ENCODE measurements at regions of chr13 and their contacts with region 1.

Region 1: GRCh38 chr13:95834134-95834765 is 157.3 kb downstream of the DNAJC3 start:
- DNase-seq: peak; percentile 65 to 88
- H3K4me3 ChIP-seq: no peak overlapping the region
- H3K27ac ChIP-seq: no peak overlapping the region
- H3K4me1 ChIP-seq: peaks cover 0 to 11% (median 6%) of the 10 kb centered on the region in 4 donors
- H3K27me3 ChIP-seq: no peaks in the 10 kb centered on the region
- CTCF ChIP-seq: peak in 5 of 7 experiments; percentile 67 to 91 (median 87)
- EP300 ChIP-seq: no peak
- POLR2A ChIP-seq: no peak

Region 2: GRCh38 chr13:95536632-95537241 is 297.5 kb before region 1 on chr13:
- intact Hi-C with region 1: loop called (anchors 10 kb)
- DNase-seq: peak in 1 of 2 donors; percentile 59
- H3K4me3 ChIP-seq: no peak overlapping the region
- H3K27ac ChIP-seq: no peak overlapping the region
- H3K4me1 ChIP-seq: peaks cover 0 to 18% (median 7%) of the 10 kb centered on the region in 4 donors
- H3K27me3 ChIP-seq: no peaks in the 10 kb centered on the region
- CTCF ChIP-seq: peak in 4 of 7 experiments; percentile 13 to 35 (median 20)
- EP300 ChIP-seq: no peak
- POLR2A ChIP-seq: no peak

Region 3: GRCh38 chr13:95624020-95624419 is 210.2 kb before region 1 on chr13:
- intact Hi-C with region 1: loop called (anchors 5 kb)
- DNase-seq: peak in 1 of 2 donors; percentile 85
- H3K4me3 ChIP-seq: no peak overlapping the region
- H3K27ac ChIP-seq: no peak overlapping the region
- H3K4me1 ChIP-seq: peaks cover 0 to 11% (median 9%) of the 10 kb centered on the region in 4 donors
- H3K27me3 ChIP-seq: no peaks in the 10 kb centered on the region
- CTCF ChIP-seq: peak in 5 of 7 experiments; percentile 22 to 67 (median 46)
- EP300 ChIP-seq: no peak
- POLR2A ChIP-seq: no peak

Measured in stomach (tissue), 19 donors.